OCI-LY7 (cell line): ENCODE measurements at regions of chr9 and their contacts with region 1.

Region 1: DNA sequence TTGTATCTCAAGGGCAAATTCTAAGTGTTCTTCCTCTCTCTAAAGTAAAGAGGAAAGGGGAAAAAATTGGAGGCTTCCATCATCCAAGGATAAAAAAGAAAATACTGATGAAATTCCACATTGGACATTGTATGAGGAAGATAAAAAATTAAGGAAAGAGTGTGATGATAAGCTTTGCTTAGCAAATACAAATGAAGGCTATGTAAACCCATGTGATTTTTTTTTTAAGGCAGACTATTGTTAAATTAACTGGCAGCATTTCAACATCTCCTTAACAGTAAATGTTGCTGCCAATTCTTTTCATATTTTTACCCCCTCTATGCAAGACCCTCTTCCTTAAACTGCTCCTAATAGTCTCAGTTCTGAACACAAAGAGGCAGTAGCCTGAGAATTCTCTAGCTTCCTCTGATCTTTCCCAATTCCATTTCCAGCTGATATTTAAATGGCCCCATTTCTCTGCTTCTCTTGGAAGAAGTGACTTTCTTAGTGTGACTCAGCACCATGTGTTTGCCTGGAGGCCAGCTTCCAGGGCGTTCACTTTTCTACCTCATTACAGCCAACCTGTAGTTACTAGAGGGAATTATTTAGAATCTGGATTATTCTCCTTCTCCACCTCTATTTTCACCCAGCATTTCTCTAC is 159.7 kb downstream of the TLE1 start:
- DNase-seq: no peak
- H3K4me3 ChIP-seq: no peak overlapping the region
- H3K27ac ChIP-seq: no peak overlapping the region
- H3K4me1 ChIP-seq: no peaks in the 10 kb centered on the region
- CTCF ChIP-seq: no peak

Region 2: DNA sequence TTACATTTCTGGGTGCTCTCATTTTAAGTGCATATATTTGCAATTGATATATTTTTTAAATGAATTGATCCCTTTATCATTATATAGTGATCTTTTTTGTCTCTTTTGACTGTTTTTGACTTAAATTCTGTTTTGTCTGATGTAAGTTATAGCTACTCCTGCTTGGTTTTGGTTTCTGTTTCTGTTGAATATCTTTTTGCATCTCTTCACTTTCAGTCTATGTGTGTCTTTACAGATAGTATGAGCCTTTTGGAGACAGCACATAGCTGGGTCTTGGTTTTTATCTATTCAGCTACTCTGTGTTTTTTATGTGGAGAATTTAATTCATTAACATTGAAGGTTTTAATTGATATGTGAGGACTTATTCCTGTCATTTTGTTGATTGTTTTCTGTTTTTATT is 770.2 kb after region 1 on chr9:
- CTCF ChIA-PET with region 1: no interaction called
- POLR2A ChIA-PET with region 1: no interaction called
- intact Hi-C with region 1: loop called (anchors 10 kb)
- DNase-seq: no peak
- H3K4me3 ChIP-seq: no peak overlapping the region
- H3K27ac ChIP-seq: no peak overlapping the region
- H3K4me1 ChIP-seq: no peaks in the 10 kb centered on the region
- CTCF ChIP-seq: no peak